ENCODE measurements at regions of chr1 and their contacts with region 1.

Region 1: DNA sequence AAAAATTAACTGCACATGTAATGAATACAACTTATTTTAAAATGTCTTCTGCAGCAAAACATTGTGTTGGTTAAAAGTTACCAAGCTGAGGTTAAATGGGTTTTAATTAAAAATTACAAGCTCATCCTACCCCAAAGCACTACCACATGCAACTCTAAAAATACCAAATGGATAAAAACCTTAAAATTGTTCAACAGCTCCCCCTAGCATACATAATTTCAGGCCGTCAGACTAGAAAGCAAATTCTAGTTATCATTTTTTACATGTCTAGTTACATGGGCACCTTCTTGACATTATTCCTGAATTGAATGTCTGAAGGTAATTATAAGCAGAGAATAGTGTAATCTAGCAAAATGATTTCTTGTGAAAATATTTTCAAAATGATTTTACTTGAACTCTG is 176.5 kb downstream of the C1orf21 start:
- DNase-seq: peak; percentile 16
- H3K4me3 ChIP-seq: no peak overlapping the region
- H3K27ac ChIP-seq: no peak overlapping the region
- H3K4me1 ChIP-seq: peaks cover 14% of the 10 kb centered on the region
- H3K27me3 ChIP-seq: no peaks in the 10 kb centered on the region
- CTCF ChIP-seq: peak; percentile 46 to 60

Region 2: GRCh38 chr1:184242507-184242943 is 320.8 kb before region 1 on chr1:
- CTCF ChIA-PET with region 1: no interaction called
- dilution Hi-C with region 1: no loop called
- in situ Hi-C with region 1: no loop called
- intact Hi-C with region 1: loop called (anchors 5 kb)
- DNase-seq: no peak
- H3K4me3 ChIP-seq: no peak overlapping the region
- H3K27ac ChIP-seq: no peak overlapping the region
- H3K4me1 ChIP-seq: no peaks in the 10 kb centered on the region
- H3K27me3 ChIP-seq: no peaks in the 10 kb centered on the region
- CTCF ChIP-seq: peak; percentile 9 to 31

Measured in mammary epithelial cell (primary cell).